Right ventricle myocardium superior (tissue), 1 donor: ENCODE measurements at regions of chr9 and their contacts with region 1.

Region 1: DNA sequence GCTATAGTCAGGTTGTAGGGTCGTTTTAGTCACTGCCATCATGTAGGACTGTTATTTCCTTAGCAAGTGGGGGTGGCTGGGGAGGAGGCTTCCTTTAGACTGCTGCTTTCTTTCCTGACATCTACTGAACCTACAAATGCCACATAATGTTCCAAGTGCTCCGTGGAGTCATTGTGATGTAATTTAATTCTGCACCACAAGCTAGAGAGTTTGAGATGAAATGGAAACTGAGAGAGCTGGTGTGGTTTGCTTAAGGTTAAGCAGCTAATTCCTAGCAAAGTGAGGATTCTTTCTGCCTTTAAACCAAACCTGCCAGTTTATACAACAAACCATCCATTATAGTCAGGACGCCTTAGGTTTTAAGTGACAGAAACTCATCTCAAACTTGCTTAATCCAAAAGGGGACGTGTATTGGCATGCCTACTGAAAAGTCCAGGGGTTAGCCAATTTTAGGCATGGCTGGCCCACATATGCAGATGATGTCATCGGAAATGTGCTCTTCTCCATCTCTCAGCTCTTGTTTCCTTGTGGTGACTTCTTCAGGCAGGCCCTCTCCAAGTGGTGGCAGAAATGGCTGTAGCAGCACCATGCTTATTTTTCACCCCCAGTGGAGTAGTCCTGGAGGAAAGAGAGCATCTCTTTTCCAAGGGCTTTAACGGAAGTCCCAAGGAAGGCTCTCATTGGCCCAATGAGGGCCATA is 30.5 kb downstream of the ZNF618 start:
- DNase-seq: no peak
- ATAC-seq: peak; percentile 36

Region 2: DNA sequence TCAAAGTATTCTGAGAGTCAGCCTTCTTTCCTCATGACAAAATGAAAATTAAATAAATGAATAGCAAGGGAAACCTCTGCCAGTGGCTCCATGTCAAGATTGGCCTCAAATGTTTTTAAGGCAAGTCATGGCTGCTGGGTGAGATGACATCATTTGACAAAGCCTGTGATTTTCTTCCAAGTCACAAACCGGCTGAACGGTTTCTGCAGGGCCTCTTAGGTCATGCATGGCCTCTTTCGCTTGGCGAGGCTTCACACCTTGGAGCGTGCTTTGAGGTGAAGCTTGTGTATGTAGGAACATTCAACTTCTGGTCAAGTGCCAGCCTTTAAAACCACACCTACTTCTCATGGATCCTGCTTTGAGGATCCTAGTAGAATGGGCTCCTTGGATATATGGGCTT is 191.5 kb before region 1 on chr9:
- intact Hi-C with region 1: no loop called
- DNase-seq: no peak
- ATAC-seq: no peak

Region 3: GRCh38 chr9:113957821-113958341 is 51.3 kb after region 1 on chr9:
- intact Hi-C with region 1: loop called (anchors 10 kb)
- DNase-seq: no peak
- ATAC-seq: peak; percentile 21